Cardiac septum (tissue), 1 donor: ENCODE measurements at regions of chr1 and their contacts with region 1.

Region 1: GRCh38 chr1:23098463-23099170 is 70.0 kb downstream of the LUZP1 start:
- DNase-seq: no peak

Region 2: GRCh38 chr1:23074012-23074411 is 24.6 kb before region 1 on chr1:
- intact Hi-C with region 1: no loop called
- DNase-seq: no peak

Region 3: GRCh38 chr1:23184212-23184934 is 85.8 kb after region 1 on chr1:
- intact Hi-C with region 1: loop called (anchors 1 kb)
- DNase-seq: no peak

Region 4: GRCh38 chr1:23273450-23274133 is 175.0 kb after region 1 on chr1:
- intact Hi-C with region 1: loop called (anchors 10 kb)
- DNase-seq: no peak